Right ventricle myocardium superior (tissue), 1 donor: ENCODE measurements at regions of chr12 and their contacts with region 1.

Region 1: DNA sequence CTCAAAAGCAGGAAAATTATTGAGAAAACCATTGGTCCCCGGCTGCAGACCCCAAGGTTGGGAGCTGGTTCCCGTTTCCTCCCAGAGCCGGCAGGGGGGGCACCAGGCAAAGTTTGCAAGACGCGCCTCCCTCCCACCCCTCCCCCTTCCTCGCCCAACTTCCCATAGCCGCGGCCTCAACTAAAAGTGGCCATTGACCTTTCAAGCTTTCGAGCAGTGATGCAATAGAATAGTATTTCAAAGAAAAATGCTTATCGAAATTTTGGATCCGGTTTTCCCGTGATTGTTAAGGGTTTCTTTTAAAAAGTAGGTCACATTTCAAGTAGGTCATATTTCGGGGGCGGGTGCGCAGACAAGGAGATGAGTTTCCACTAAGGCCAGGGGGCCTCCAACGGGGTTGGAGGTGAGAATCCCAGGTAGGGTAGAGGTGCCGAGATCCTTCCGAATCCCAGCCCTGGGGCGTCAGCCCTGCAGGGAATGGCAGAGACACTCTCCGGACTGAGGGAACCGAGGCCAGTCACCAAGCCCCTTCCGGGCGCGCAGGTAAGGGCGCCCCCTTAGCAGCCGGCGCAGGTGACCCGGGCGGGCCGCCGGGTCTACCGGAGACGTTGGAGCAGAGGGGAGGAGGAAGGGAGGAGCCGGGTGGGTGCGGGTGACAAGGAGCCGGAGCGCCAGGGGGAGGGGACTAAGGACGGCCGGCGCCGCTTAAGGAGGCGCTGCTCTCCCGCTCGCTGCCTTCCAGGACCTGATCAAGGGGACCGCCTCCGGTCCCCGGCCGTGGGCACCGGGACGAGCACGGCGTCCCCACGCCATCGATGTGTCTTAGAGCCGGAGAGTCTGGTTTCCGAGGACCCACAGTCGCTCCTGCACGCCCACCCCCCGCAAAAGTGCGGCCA is 2.6 kb upstream of the SOCS2 start:
- DNase-seq: peak; percentile 90
- ATAC-seq: peak; percentile 82

Region 2: DNA sequence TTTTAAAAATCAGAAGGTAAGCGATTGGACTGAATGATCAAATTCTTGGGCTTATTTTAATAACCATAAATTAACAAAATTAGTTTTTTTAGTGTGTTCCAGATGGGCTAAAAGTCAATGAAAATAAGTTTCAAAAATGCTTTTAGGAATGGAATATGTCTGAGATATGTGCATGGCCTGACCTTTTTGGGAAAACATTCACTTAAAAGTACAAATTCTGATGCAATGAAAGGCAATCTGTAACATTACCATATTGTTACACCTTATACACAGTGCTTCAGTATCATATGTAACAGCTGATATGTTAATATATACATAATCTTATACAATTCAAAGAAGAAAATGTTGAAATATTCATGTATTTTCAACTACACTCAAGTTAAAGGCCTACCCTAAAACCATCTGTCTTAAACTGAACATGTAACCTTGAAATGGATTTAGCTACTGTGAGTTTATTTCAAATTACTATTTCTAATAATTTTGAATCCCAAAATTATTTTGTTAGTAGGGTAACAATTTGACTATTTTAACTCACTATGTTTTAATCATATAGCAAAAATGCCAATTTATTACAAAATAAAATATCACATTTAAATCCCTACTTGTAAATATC is 725.6 kb before region 1 on chr12:
- intact Hi-C with region 1: no loop called
- DNase-seq: no peak
- ATAC-seq: no peak

Region 3: DNA sequence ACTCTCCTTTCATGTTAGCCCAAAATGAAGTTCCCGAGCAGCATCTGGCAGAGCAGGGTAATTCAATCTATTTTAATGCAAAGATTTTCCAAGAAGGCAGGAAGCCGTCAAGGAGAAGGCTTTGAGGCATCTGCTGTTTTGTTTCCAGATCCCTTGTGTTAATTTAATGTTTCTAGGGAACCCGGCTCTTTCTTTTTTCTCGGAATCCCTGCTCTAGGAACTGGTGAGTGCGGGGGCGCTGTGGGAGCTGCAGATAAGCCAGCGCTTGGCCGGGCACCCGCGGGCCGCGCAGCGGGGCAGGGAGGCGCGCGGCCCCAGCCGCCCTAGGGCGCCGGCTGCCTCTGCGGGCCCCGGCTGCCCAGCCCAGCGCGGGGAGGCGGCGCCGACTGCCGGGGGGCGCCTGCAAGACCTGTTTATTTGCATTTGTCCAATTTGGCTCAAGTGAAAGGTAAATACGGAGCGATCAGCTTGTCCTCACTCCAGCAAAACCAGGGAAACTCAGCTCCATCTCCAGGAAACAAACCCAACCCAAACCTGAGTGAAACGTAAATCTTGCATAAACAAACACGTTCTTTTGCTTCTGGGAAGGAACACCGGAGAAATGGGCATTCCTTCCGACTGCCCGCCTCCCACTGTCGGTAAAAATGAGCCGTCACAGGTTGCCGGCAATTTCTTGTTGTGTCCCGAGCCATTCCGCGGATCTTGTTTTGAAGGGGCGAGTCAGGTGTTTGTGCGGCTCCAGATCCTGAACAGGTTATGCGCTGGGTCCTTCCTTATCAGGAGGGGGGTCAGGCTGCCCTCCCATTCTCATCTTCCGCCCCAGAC is 172.4 kb after region 1 on chr12:
- intact Hi-C with region 1: loop called (anchors 2 kb)
- DNase-seq: peak; percentile 87
- ATAC-seq: peak; percentile 94

Region 4: DNA sequence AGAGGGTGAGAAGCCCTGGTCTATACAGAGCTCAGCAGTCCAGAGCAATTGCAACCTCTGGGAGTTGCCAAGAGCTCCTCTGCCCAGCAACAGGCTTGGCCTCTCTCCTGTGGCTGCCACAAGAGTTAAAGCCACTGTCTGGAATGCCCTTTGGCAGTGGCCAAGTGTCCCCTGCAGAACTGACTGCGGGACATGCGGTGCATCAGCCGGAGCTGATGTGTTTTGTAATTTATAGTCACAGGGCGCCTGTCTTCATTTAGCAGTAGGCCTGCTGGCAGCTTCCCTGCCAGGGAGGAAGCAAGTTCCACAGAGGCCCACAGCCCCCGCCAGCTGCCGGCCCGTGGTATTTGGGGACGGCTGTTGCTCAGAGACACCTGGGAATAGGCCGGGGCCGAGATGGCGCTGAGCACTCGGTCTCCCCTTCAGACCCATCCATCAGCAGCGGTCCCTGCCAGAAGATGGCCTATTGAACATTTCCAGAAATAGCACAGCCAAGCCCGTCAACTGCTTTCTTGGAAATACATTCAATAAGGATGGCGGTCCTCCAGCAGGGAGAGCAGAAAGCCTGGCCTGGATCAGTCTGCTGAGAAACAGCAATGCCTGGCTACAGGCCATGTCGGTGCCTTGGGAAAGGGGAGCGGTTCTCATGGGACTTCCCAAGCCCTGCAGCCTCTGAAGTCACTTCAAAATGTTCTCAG is 324.6 kb after region 1 on chr12:
- intact Hi-C with region 1: loop called (anchors 5 kb)
- DNase-seq: peak; percentile 94
- ATAC-seq: peak; percentile 92

Region 5: GRCh38 chr12:94074980-94075928 is 505.4 kb after region 1 on chr12:
- intact Hi-C with region 1: loop called (anchors 5 kb)
- DNase-seq: peak; percentile 75
- ATAC-seq: peak; percentile 90